Right cardiac atrium (tissue), 5 donors: ENCODE measurements at regions of chr10 and their contacts with region 1.

Region 1: DNA sequence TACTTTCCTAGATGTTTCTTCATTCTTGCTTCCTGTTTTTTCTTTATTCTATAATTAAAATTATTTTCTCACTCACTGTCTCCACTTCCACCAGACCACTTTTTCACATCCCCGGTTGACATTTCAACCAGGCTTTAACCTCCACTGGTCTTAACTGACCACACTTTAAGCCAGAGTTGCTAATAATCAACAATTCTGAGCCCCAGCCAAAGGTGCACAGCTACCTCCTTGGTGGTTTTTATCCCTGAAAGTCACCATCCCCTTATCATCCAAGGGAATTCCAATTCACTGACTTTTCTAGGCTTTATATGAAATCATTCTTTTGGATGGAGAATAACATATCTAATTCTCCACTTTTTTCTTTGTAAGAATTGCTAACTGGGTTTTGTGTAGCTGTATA is 138.9 kb downstream of the FRMD4A start:
- DNase-seq: no peak
- ATAC-seq: no peak
- H3K4me3 ChIP-seq: no peak overlapping the region
- H3K27ac ChIP-seq: no peak overlapping the region
- H3K4me1 ChIP-seq: no peaks in the 10 kb centered on the region
- H3K27me3 ChIP-seq: no peaks in the 10 kb centered on the region

Region 2: GRCh38 chr10:14074057-14074884 is 117.6 kb before region 1 on chr10:
- intact Hi-C with region 1: no loop called
- DNase-seq: peak; percentile 91 to 95 (median 94)
- ATAC-seq: peak; percentile 93 to 96
- H3K4me3 ChIP-seq: peak overlapping the region; percentile 27
- H3K27ac ChIP-seq: peak overlapping the region; percentile 46
- H3K4me1 ChIP-seq: peaks cover 7% of the 10 kb centered on the region
- H3K27me3 ChIP-seq: no peaks in the 10 kb centered on the region

Region 3: GRCh38 chr10:14478604-14479003 is 286.7 kb after region 1 on chr10:
- intact Hi-C with region 1: loop called (anchors 2 to 10 kb)
- DNase-seq: peak; percentile 63 to 87 (median 79)
- ATAC-seq: peak; percentile 60 to 76
- H3K4me3 ChIP-seq: no peak overlapping the region
- H3K27ac ChIP-seq: no peak overlapping the region
- H3K4me1 ChIP-seq: no peaks in the 10 kb centered on the region
- H3K27me3 ChIP-seq: no peaks in the 10 kb centered on the region